ENCODE measurements at regions of chr1 and their contacts with region 1.

Region 1: GRCh38 chr1:101238681-101239094 is 1.9 kb downstream of the S1PR1 start:
- DNase-seq: peak; percentile 91
- ATAC-seq: peak; percentile 69
- H3K4me3 ChIP-seq: no peak overlapping the region; the same call in 1 of the 2 replicates
- H3K27ac ChIP-seq: no peak overlapping the region
- H3K4me1 ChIP-seq: no peaks in the 10 kb centered on the region
- H3K27me3 ChIP-seq: no peaks in the 10 kb centered on the region
- CTCF ChIP-seq: peak; percentile 93
- POLR2A ChIP-seq: no peak
- RAD21 ChIP-seq: peak; percentile 90

Region 2: GRCh38 chr1:100989306-100990077 is 249.2 kb before region 1 on chr1:
- CTCF ChIA-PET with region 1: interaction called, 8 read pairs
- POLR2A ChIA-PET with region 1: no interaction called
- dilution Hi-C with region 1: no loop called
- in situ Hi-C with region 1: no loop called
- intact Hi-C with region 1: loop called (anchors 1 kb)
- DNase-seq: peak; percentile 94
- ATAC-seq: peak; percentile 63
- H3K4me3 ChIP-seq: no peak overlapping the region
- H3K27ac ChIP-seq: peak overlapping the region; percentile 61; the same call in 1 of the 2 replicates
- H3K4me1 ChIP-seq: peaks cover 8% of the 10 kb centered on the region
- H3K27me3 ChIP-seq: no peaks in the 10 kb centered on the region
- CTCF ChIP-seq: no peak
- POLR2A ChIP-seq: no peak
- RAD21 ChIP-seq: no peak

Region 3: DNA sequence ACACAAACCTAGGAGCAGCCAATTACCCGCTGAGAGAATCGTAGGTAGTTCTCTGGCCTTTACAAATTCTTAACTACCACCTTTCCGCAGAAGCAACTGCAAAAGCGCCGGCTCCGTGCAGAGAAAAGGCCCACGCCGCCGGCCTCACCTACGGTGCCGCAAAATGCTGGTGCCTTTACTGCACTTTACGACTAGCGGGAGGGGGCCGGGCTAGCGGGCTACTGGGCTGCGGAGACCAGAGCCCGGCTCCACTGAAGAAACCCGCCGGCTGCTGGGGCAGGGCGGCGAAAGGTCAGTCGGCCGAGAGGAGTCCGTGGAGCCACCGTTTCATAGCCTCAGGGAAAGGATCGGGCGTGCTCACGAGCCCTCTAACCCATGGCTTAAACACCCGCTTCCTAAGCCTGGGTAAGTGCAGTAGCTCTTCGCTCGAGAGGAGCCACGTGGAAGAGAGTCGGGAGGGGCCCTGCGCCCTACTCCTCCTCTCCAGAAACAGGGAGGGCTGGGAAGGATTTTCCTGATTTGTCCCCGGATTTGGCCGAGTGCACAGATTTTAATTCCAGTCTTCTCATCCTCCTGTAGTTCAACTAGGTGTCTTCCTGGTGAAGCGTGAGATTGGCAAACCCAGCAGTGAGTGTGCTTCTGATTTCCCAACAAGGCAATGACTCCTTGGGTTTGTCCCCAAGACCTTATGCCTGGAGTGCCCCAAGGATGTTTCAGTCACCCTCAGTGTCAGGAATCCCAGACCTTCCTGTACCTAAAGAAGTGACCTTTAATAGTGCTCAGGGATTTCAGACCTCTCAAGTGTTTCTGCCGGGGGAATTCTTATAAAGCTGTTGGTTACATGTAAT is 212.8 kb before region 1 on chr1 and contains the start of gene DPH5:
- CTCF ChIA-PET with region 1: no interaction called
- POLR2A ChIA-PET with region 1: no interaction called
- dilution Hi-C with region 1: no loop called
- in situ Hi-C with region 1: loop called (anchors 25 kb)
- intact Hi-C with region 1: loop called (anchors 1 kb)
- DNase-seq: peak; percentile 91
- ATAC-seq: peak; percentile 98
- H3K4me3 ChIP-seq: peak within 1 kb of the TSS; percentile 82
- H3K27ac ChIP-seq: peak within 1 kb of the TSS; percentile 97
- H3K4me1 ChIP-seq: 0 out of 2 replicates have a peak, but pooled peaks cover 2% of the 10 kb centered on the region
- H3K27me3 ChIP-seq: no peaks in the 10 kb centered on the region
- CTCF ChIP-seq: no peak
- POLR2A ChIP-seq: peak; percentile 89
- RAD21 ChIP-seq: no peak
- total RNA-seq, gene DPH5: 32.3 and 45.5 TPM in 2 replicates

Region 4: GRCh38 chr1:101105877-101106276 is 132.8 kb before region 1 on chr1:
- CTCF ChIA-PET with region 1: no interaction called
- POLR2A ChIA-PET with region 1: no interaction called
- dilution Hi-C with region 1: no loop called
- in situ Hi-C with region 1: no loop called
- intact Hi-C with region 1: no loop called
- DNase-seq: peak; percentile 7
- ATAC-seq: peak; percentile 51
- H3K4me3 ChIP-seq: no peak overlapping the region
- H3K27ac ChIP-seq: no peak overlapping the region
- H3K4me1 ChIP-seq: peaks cover 3% of the 10 kb centered on the region; the same call in 1 of the 2 replicates
- H3K27me3 ChIP-seq: no peaks in the 10 kb centered on the region; the same call in 1 of the 2 replicates
- CTCF ChIP-seq: no peak
- POLR2A ChIP-seq: no peak
- RAD21 ChIP-seq: no peak

Region 5: DNA sequence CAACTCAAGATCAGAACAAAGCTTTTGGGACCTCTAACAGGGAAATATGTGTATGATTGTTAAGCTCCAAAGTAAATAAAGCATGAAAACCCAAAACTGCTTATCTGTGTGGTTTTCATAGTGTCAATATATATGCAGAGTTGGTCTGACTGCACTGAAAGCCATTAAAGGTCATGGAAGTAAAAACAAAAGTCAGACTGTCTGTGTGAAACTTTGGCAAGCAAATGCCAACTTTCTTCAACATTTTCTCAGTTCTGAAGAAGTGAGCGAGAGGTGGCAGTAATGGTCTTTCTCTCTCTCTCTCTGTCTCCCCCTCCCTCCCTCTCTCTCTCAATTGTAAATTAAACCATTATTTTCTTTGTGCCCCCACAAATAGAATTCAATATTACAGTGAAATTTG is 101.9 kb before region 1 on chr1:
- CTCF ChIA-PET with region 1: interaction called, 7 read pairs
- POLR2A ChIA-PET with region 1: no interaction called
- dilution Hi-C with region 1: no loop called
- in situ Hi-C with region 1: no loop called
- intact Hi-C with region 1: loop called (anchors 2 kb)
- DNase-seq: peak; percentile 19
- ATAC-seq: peak; percentile 21; the same call in 1 of the 2 replicates
- H3K4me3 ChIP-seq: no peak overlapping the region
- H3K27ac ChIP-seq: no peak overlapping the region
- H3K4me1 ChIP-seq: peaks cover 3% of the 10 kb centered on the region
- H3K27me3 ChIP-seq: no peaks in the 10 kb centered on the region
- CTCF ChIP-seq: peak; percentile 35
- POLR2A ChIP-seq: no peak
- RAD21 ChIP-seq: peak; percentile 50

Region 6: GRCh38 chr1:101288491-101288944 is 49.8 kb after region 1 on chr1:
- CTCF ChIA-PET with region 1: interaction called, 6 read pairs
- POLR2A ChIA-PET with region 1: interaction called, 5 read pairs
- dilution Hi-C with region 1: no loop called
- in situ Hi-C with region 1: no loop called
- intact Hi-C with region 1: loop called (anchors 1 kb)
- DNase-seq: peak; percentile 91
- ATAC-seq: peak; percentile 90
- H3K4me3 ChIP-seq: no peak overlapping the region; the same call in 1 of the 2 replicates
- H3K27ac ChIP-seq: no peak overlapping the region
- H3K4me1 ChIP-seq: peaks cover 2% of the 10 kb centered on the region; the same call in 1 of the 2 replicates
- H3K27me3 ChIP-seq: peaks cover under 1% of the 10 kb centered on the region; the same call in 1 of the 2 replicates
- CTCF ChIP-seq: peak; percentile 96
- POLR2A ChIP-seq: 0 out of 2 replicates have a peak, but pooled peaks have one; percentile 33
- RAD21 ChIP-seq: peak; percentile 90

Region 7: GRCh38 chr1:101438359-101438758 is 199.7 kb after region 1 on chr1:
- CTCF ChIA-PET with region 1: no interaction called
- POLR2A ChIA-PET with region 1: no interaction called
- dilution Hi-C with region 1: no loop called
- in situ Hi-C with region 1: no loop called
- intact Hi-C with region 1: no loop called
- DNase-seq: peak; percentile 2
- ATAC-seq: peak; percentile 57; the same call in 1 of the 2 replicates
- H3K4me3 ChIP-seq: no peak overlapping the region
- H3K27ac ChIP-seq: no peak overlapping the region
- H3K4me1 ChIP-seq: no peaks in the 10 kb centered on the region
- H3K27me3 ChIP-seq: peaks cover 5% of the 10 kb centered on the region
- CTCF ChIP-seq: peak; percentile 37
- POLR2A ChIP-seq: no peak
- RAD21 ChIP-seq: peak; percentile 38; the same call in 1 of the 2 replicates